Psoas muscle (tissue), 8 donors: ENCODE measurements at regions of chr2 and their contacts with region 1.

Region 1: DNA sequence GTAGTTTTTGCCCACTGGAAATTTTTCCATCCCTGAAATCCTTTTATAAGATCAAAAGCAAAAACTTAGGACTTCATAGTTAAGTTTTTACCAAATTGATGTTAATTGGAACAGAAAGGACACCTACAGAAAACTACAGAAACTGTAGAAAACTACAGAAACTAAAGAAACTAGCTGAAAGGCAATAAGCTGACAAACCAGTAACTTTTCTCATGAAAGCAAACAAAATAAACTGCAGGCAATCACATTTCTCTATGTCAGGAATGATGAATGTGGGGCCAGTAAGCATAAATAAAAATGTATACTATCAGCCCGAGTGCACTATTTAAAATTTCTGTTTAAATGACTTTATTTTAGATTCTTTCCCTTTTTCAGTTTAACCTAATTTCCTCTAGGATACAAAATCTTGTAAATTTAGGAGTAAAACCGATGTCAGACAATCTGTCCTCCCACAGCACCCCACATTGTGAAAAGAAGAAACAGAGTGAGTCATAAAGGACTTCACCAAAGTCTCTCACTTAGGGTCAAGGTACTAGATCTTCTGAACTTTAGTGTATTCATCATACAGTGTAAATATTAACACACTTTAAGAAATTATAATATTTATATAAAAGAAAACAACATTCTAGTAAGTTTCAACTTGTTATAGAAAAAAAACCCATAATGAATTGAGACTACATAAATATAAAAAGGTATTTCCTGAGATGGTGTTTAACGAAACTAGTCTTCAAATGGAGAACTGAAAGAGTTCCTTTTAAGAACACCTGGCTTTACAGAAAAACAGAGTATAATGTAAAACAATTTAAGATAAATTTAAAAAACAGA is 46.6 kb downstream of the USP40 start:
- DNase-seq: no peak
- ATAC-seq: no peak
- H3K4me3 ChIP-seq: no peak overlapping the region
- H3K27ac ChIP-seq: no peak overlapping the region
- H3K4me1 ChIP-seq: no peaks in the 10 kb centered on the region
- H3K27me3 ChIP-seq: no peaks in the 10 kb centered on the region
- CTCF ChIP-seq: no peak

Region 2: DNA sequence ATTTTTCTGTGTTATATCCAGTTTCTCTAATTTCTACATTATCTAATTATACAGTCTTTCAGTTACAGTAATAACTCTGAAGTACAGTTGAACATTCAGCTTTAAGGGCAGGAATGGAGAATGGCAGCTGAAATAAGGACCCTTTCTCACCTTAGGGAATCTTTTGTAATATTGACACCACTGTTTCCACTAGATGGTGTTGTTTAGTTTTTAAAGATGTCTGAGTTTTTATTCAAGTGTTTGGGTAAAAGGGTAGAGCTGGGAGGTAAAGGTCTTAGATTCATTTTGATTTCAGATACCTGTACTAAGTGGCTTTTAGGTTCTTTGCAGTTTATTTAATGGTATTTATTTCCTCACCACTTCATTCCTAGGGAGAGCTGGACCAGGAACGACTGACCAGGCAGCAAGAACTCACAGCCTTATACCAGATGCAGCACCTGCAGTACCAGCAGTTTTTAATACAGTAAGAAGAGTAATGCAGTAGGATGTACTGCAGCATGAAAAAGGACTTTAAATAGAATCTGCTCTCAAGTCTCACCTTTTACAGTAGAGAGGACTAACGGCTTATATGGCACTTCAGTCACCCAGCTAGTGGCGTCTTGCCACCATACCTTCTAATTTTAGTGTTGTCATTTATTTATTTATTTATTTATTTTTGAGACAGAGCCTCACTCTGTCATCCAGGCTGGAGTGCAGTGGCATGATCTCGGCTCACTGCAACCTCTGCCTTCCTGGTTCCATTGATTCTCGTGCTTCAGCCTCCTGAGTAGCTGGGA is 710.5 kb before region 1 on chr2:
- intact Hi-C with region 1: loop called in 1 of 2 experiments (anchors 10 kb)
- DNase-seq: peak in 1 of 2 donors; percentile 60
- ATAC-seq: peak; percentile 76 to 96 (median 94)
- H3K4me3 ChIP-seq: no peak overlapping the region
- H3K27ac ChIP-seq: peak overlapping the region; percentile 59
- H3K4me1 ChIP-seq: peaks cover 8% of the 10 kb centered on the region
- H3K27me3 ChIP-seq: no peaks in the 10 kb centered on the region
- CTCF ChIP-seq: peak; percentile 8